ENCODE measurements at regions of chr15 and their contacts with region 1.

Region 1: GRCh38 chr15:89087830-89088604 is at the start of gene ABHD2:
- DNase-seq: peak; percentile 99
- H3K4me3 Mint-ChIP-seq: no peak within 1 kb of the TSS
- H3K27ac Mint-ChIP-seq: no peak within 1 kb of the TSS
- H3K4me1 Mint-ChIP-seq: peaks cover 36% of the 10 kb centered on the region
- H3K27me3 Mint-ChIP-seq: no peaks in the 10 kb centered on the region
- total RNA-seq, gene ABHD2: 36.0 to 38.5 TPM

Region 2: DNA sequence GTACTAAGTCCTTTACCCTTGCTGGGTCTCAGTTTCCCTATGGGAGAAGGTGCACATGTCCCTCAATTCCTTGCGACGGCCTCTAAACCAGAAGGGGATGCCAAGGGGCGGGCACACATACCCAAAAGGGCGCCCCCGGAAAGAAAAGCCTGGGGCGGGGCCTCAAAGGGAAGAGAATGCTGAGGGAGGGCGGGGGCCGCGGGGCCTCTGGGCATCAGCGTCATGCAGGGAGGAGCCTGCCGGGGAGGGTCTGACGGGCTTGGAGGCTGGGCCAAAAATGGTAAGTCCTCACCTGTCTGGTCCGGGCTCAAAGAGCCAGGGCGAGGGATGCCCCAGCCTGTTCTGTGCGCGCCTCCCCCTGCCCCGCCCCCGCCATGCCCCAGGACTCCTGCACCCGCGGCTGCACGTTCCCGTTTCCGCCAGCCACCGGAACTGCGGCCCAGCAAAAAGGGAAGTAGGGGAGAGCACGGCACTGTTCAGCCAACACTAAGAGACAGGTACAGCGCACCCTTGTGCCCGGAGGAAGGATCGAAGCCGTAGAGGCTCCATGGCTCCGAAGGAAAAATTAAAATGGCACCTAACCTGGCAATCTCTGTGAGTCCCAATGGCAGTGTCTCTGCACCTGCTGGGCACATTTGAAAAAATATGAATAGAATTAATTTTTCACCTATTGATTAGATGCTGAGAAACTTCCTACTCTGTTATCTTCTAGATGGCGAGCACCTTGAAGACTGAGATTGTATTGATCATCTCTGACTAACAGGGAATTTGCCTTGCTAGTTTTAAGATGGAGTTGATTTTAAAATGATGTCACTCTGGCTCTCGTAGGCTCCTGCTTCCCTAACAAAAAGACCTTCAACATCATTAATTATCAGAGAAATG is 541.5 kb before region 1 on chr15 and contains the start of gene DET1:
- CTCF ChIA-PET with region 1: no interaction called
- POLR2A ChIA-PET with region 1: no interaction called
- intact Hi-C with region 1: loop called (anchors 1 kb)
- DNase-seq: peak; percentile 98
- H3K4me3 Mint-ChIP-seq: peak within 1 kb of the TSS; percentile 88
- H3K27ac Mint-ChIP-seq: peak within 1 kb of the TSS; percentile 89
- H3K4me1 Mint-ChIP-seq: peaks cover 13% of the 10 kb centered on the region
- H3K27me3 Mint-ChIP-seq: no peaks in the 10 kb centered on the region
- total RNA-seq, gene DET1: 1.9 to 2.2 TPM

Region 3: DNA sequence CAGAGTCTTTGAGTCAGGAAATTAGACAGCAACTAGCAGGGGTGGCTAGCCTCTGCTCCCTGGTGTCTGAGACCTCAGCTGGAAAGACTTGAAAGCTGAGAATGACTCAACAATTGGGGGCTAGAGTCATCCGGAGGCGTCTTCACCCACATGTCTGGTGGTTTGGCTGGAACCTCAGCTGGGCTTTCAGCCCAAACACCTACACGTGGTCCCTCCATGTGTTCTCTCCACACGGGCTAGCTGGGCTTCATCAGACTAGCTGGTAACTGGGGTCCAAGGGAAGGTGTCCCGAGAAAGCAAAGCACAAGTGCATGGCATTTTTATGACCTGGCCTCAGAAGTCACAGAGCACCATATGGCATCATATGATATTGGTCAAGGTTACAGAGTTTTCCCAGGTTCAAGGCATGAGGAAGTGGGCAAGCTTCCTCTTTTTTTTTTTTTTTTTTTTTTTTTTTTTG is 19.7 kb before region 1 on chr15:
- CTCF ChIA-PET with region 1: interaction called, 5 read pairs
- POLR2A ChIA-PET with region 1: interaction called, 9 read pairs
- intact Hi-C with region 1: loop called (anchors 2 kb)
- DNase-seq: peak; percentile 78
- H3K4me3 Mint-ChIP-seq: no peak overlapping the region
- H3K27ac Mint-ChIP-seq: peak overlapping the region; percentile 57
- H3K4me1 Mint-ChIP-seq: peaks cover 12% of the 10 kb centered on the region
- H3K27me3 Mint-ChIP-seq: peaks cover 2% of the 10 kb centered on the region

Region 4: GRCh38 chr15:89107984-89108383 is 20.0 kb after region 1 on chr15:
- CTCF ChIA-PET with region 1: no interaction called
- POLR2A ChIA-PET with region 1: no interaction called
- intact Hi-C with region 1: no loop called
- DNase-seq: peak; percentile 12
- H3K4me3 Mint-ChIP-seq: no peak overlapping the region
- H3K27ac Mint-ChIP-seq: no peak overlapping the region
- H3K4me1 Mint-ChIP-seq: peaks cover 35% of the 10 kb centered on the region
- H3K27me3 Mint-ChIP-seq: no peaks in the 10 kb centered on the region

Region 5: GRCh38 chr15:89129123-89129815 is 41.3 kb after region 1 on chr15:
- CTCF ChIA-PET with region 1: interaction called, 30 read pairs
- POLR2A ChIA-PET with region 1: interaction called, 5 read pairs
- intact Hi-C with region 1: loop called (anchors 1 kb)
- DNase-seq: peak; percentile 68
- H3K4me3 Mint-ChIP-seq: no peak overlapping the region
- H3K27ac Mint-ChIP-seq: no peak overlapping the region
- H3K4me1 Mint-ChIP-seq: peaks cover 29% of the 10 kb centered on the region
- H3K27me3 Mint-ChIP-seq: no peaks in the 10 kb centered on the region

Region 6: DNA sequence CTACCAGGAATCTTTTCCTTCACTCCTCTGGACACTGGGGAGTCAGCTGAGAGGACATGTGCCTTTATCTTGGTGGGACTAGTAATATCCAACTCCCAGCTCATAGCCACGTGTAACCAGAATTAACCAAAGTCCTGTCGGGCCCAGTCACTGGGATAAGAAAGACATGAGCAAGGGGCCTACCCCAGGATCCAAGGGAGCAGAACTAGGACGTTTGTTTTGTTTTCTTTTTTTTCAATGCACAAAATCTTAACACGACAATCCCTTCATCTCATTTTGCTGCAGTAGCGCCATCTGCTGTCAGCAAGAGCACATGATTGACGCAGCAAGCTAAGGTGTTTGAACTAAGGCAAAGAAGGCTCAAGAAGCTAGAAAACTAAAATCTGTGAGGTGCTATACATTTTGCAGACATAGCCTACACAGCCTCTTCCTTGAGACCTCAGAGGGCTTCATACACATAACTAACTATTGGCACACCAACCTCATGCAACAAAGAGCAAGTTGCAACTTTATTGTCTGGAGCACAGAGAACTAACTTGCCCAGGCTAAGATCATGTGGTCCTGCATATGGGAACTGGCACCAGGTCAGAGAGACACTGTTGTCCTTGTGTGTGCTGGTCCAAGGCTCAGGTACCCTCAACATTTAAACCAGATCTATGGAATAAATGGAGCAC is 89.8 kb after region 1 on chr15:
- CTCF ChIA-PET with region 1: interaction called, 34 read pairs
- POLR2A ChIA-PET with region 1: interaction called, 5 read pairs
- intact Hi-C with region 1: no loop called
- DNase-seq: peak; percentile 77
- H3K4me3 Mint-ChIP-seq: no peak overlapping the region
- H3K27ac Mint-ChIP-seq: no peak overlapping the region
- H3K4me1 Mint-ChIP-seq: peaks cover 39% of the 10 kb centered on the region
- H3K27me3 Mint-ChIP-seq: no peaks in the 10 kb centered on the region

Region 7: GRCh38 chr15:89334510-89335288 is 246.7 kb after region 1 on chr15 and contains the start of gene POLG:
- CTCF ChIA-PET with region 1: no interaction called
- POLR2A ChIA-PET with region 1: no interaction called
- intact Hi-C with region 1: loop called (anchors 2 kb)
- DNase-seq: peak; percentile 99
- H3K4me3 Mint-ChIP-seq: peak within 1 kb of the TSS; percentile 85
- H3K27ac Mint-ChIP-seq: peak within 1 kb of the TSS; percentile 93
- H3K4me1 Mint-ChIP-seq: peaks cover 50% of the 10 kb centered on the region
- H3K27me3 Mint-ChIP-seq: peaks cover 4% of the 10 kb centered on the region
- total RNA-seq, gene POLG: 94.8 to 97.4 TPM